IMR-90 (cell line): ENCODE measurements at regions of chr2 and their contacts with region 1.

Region 1: GRCh38 chr2:202178342-202178958 is 59.9 kb downstream of the SUMO1 start:
- DNase-seq: peak; percentile 79
- ATAC-seq: peak; percentile 94
- H3K4me3 ChIP-seq: no peak overlapping the region
- H3K27ac ChIP-seq: no peak overlapping the region
- H3K4me1 ChIP-seq: peaks cover 2% of the 10 kb centered on the region; the same call in 1 of the 2 replicates
- H3K27me3 ChIP-seq: no peaks in the 10 kb centered on the region
- CTCF ChIP-seq: peak; percentile 89
- POLR2A ChIP-seq: peak; percentile 44; the same call in 1 of the 2 replicates
- RAD21 ChIP-seq: peak; percentile 94

Region 2: DNA sequence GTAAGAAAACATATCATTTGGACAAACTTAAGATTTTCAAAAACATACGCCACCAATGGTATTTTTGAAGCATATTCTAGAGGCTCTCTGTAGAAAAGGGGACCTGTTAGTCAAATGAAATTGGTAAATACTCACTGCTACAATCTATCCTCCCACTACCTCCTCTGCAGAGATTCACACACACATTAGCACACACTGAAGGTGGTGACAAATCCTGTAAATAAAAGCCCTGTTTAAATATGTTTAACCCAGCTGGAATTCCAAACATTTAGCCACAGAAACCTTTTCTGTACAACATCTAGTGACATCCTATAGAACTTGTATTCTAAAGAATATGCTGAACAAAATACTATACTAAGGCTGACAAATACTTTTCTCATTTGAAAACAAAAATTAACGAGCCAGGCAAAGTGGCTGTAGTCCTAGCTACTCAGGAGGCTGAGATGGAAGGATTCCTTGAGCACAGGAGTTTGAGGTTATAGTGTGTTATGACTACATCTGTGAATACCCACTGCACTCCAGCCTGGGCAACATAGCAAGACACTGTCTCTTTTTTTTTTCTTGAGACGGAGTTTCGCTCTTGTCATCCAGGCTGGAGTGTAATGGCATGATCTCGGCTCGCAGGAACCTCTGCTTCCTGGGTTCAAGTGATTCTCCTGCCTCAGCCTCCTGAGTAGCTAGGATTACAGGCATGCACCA is 423.6 kb before region 1 on chr2:
- CTCF ChIA-PET with region 1: no interaction called
- POLR2A ChIA-PET with region 1: no interaction called
- dilution Hi-C with region 1: no loop called
- in situ Hi-C with region 1: no loop called
- intact Hi-C with region 1: loop called (anchors 5 kb)
- DNase-seq: peak; percentile 60
- ATAC-seq: peak; percentile 90
- H3K4me3 ChIP-seq: no peak overlapping the region
- H3K27ac ChIP-seq: no peak overlapping the region
- H3K4me1 ChIP-seq: peaks cover 6% of the 10 kb centered on the region; the same call in 1 of the 2 replicates
- H3K27me3 ChIP-seq: no peaks in the 10 kb centered on the region
- CTCF ChIP-seq: no peak
- POLR2A ChIP-seq: no peak
- RAD21 ChIP-seq: no peak

Region 3: GRCh38 chr2:201860636-201861066 is 317.8 kb before region 1 on chr2:
- CTCF ChIA-PET with region 1: interaction called, 6 read pairs
- POLR2A ChIA-PET with region 1: no interaction called
- dilution Hi-C with region 1: no loop called
- in situ Hi-C with region 1: no loop called
- intact Hi-C with region 1: loop called (anchors 1 kb)
- DNase-seq: peak; percentile 93
- ATAC-seq: peak; percentile 83
- H3K4me3 ChIP-seq: no peak overlapping the region
- H3K27ac ChIP-seq: peak overlapping the region; percentile 68; the same call in 1 of the 2 replicates
- H3K4me1 ChIP-seq: peaks cover 26% of the 10 kb centered on the region
- H3K27me3 ChIP-seq: no peaks in the 10 kb centered on the region
- CTCF ChIP-seq: peak; percentile 80
- POLR2A ChIP-seq: 0 out of 2 replicates have a peak, but pooled peaks have one; percentile 43
- RAD21 ChIP-seq: peak; percentile 98

Region 4: GRCh38 chr2:202104278-202104870 is 74.1 kb before region 1 on chr2:
- CTCF ChIA-PET with region 1: interaction called, 3 read pairs
- POLR2A ChIA-PET with region 1: no interaction called
- dilution Hi-C with region 1: no loop called
- in situ Hi-C with region 1: no loop called
- intact Hi-C with region 1: loop called (anchors 1 kb)
- DNase-seq: peak; percentile 54
- ATAC-seq: peak; percentile 89
- H3K4me3 ChIP-seq: no peak overlapping the region
- H3K27ac ChIP-seq: no peak overlapping the region
- H3K4me1 ChIP-seq: peaks cover 5% of the 10 kb centered on the region
- H3K27me3 ChIP-seq: no peaks in the 10 kb centered on the region
- CTCF ChIP-seq: peak; percentile 68
- POLR2A ChIP-seq: no peak
- RAD21 ChIP-seq: peak; percentile 79